Endothelial cell of umbilical vein (primary cell): ENCODE measurements at regions of chr19 and their contacts with region 1.

Region 1: DNA sequence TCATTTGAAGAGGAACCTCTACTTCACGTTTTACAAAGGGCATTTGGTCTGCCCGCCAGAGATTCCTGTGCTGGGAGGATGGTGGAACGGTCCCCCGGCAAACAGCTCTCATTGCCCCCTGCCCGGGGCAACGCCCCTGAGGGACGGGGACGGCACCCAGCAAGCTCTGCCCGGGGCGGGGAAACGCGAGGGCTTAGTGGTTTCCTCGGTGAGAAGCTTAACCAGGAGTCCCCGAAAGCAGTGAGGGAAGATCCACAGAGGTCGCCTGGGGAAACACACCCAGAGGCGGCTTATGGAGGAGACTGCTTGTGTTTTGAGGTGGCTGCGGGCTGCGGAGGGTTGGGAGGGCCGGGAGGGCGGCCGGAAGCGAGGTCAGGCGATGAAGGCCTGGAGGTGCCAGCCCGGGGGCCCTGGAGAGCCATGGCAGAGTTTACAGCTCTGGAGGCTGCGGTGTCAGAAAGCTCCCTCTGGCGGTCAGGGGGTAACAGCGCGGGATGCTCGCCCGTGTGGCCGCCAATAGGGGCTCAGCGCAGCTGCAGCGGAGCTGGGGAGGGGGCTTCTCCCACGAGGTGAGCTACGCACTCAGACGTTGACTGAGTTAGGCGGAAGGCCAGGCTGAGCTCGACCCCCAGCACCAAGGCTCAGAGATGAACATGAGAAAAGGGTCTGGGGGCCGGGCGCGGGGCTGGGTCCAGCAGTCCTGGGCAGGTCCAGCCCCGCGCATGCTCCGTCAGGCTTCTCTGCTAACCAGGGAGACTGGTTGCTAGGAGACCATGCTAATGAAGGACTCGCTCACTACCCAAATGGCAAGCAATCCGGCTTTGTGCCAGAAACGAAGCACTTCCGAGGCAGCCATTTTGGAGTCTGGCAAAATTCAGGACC is 652 bp upstream of the TPGS1 start:
- DNase-seq: peak; percentile 100
- H3K4me3 ChIP-seq: peak overlapping the region; percentile 26 to 91 (median 65)
- H3K27ac ChIP-seq: peak overlapping the region; percentile 87
- H3K4me1 ChIP-seq: peaks cover 18% of the 10 kb centered on the region
- H3K27me3 ChIP-seq: no peaks in the 10 kb centered on the region
- CTCF ChIP-seq: peak; percentile 97 to 100
- POLR2A ChIP-seq: no peak

Region 2: GRCh38 chr19:294946-295686 is 211.5 kb before region 1 on chr19:
- CTCF ChIA-PET with region 1: interaction called, 6 read pairs
- POLR2A ChIA-PET with region 1: no interaction called
- dilution Hi-C with region 1: no loop called
- intact Hi-C with region 1: loop called (anchors 10 kb)
- DNase-seq: no peak
- H3K4me3 ChIP-seq: no peak overlapping the region
- H3K27ac ChIP-seq: no peak overlapping the region
- H3K4me1 ChIP-seq: peaks cover 11% of the 10 kb centered on the region
- H3K27me3 ChIP-seq: peaks cover 16 to 28% of the 10 kb centered on the region in 2 experiments
- CTCF ChIP-seq: peak; percentile 77 to 97
- POLR2A ChIP-seq: no peak

Region 3: GRCh38 chr19:383922-384798 is 122.5 kb before region 1 on chr19:
- CTCF ChIA-PET with region 1: interaction called, 20 read pairs
- POLR2A ChIA-PET with region 1: no interaction called
- dilution Hi-C with region 1: no loop called
- intact Hi-C with region 1: loop called (anchors 1 kb)
- DNase-seq: peak; percentile 34
- H3K4me3 ChIP-seq: no peak overlapping the region
- H3K27ac ChIP-seq: no peak overlapping the region
- H3K4me1 ChIP-seq: no peaks in the 10 kb centered on the region
- H3K27me3 ChIP-seq: peaks cover 2 to 15% of the 10 kb centered on the region in 2 experiments
- CTCF ChIP-seq: peak; percentile 37 to 69
- POLR2A ChIP-seq: no peak

Region 4: GRCh38 chr19:401866-402603 is 104.6 kb before region 1 on chr19:
- CTCF ChIA-PET with region 1: no interaction called
- POLR2A ChIA-PET with region 1: no interaction called
- dilution Hi-C with region 1: no loop called
- intact Hi-C with region 1: no loop called
- DNase-seq: no peak
- H3K4me3 ChIP-seq: no peak overlapping the region
- H3K27ac ChIP-seq: no peak overlapping the region
- H3K4me1 ChIP-seq: no peaks in the 10 kb centered on the region
- H3K27me3 ChIP-seq: no peaks in the 10 kb centered on the region
- CTCF ChIP-seq: no peak
- POLR2A ChIP-seq: no peak

Region 5: DNA sequence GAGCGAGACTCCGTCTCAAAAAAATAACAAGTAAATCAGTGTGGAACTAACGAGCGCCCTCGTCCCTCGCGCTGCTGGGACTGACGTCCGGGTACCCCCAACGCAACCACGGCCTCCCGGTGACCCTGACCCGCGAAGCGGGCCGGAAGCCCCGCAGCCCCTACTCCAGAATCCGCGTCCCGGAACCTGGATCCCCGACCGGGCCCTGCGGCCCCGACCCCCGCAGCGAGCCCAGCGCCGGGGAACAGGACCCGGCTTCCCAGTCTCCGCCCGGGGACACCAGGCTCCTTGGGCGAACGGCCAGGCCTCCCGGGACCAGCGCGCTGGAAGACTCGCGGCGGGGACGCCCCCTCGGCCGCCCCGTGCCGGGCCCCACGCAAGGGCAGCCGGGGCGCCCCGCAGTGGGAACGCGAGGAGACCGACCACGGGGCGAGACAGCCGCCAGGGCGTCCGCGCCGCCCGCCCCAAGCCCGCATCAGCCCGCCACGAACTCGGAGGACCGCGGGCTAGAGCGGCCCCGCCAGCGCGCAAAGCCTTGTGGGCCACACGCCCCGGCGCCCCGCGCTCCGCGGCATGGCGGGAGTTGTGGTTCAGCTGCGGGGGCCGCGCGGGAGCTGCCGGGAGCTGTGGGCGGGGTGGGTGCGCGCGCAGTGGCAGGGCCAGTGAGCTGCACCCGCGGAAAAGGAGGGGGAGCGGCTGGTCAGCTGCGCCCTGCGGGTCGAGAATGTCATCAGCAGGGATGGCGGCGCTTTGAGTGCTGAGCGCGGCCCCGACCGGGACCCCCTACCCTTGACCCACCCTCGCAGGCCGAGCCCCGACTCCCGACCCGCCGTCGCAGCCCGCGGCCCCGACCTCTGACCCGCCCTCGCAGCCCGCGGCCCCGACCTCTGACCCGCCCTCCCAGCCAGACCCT is 17.9 kb before region 1 on chr19:
- CTCF ChIA-PET with region 1: interaction called, 10 read pairs
- POLR2A ChIA-PET with region 1: interaction called, 9 read pairs
- dilution Hi-C with region 1: no loop called
- intact Hi-C with region 1: loop called (anchors 1 kb)
- DNase-seq: peak; percentile 94
- H3K4me3 ChIP-seq: peak overlapping the region; percentile 53 to 77 (median 65)
- H3K27ac ChIP-seq: peak overlapping the region; percentile 92
- H3K4me1 ChIP-seq: peaks cover 7% of the 10 kb centered on the region
- H3K27me3 ChIP-seq: no peaks in the 10 kb centered on the region
- CTCF ChIP-seq: no peak
- POLR2A ChIP-seq: peak; percentile 87

Region 6: DNA sequence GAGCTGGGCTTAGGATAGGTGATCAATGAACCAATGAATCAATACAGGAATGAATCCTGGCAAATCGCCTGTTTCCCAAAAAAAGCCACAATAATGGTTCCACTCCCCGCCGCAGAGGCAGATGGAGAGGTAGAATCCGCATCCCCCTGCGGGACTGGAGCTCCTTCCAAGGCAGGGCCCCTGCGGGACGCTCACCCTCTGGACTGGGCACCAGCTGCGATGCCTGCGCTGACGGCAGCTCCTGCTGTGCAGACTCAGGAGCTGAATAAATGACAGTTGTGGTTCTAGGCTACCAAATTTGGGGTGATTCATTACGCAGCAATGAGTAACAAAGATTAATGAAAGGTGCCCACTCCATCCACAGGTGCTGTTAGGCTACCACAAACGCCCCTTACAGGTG is 16.1 kb after region 1 on chr19:
- CTCF ChIA-PET with region 1: interaction called, 22 read pairs
- POLR2A ChIA-PET with region 1: interaction called, 4 read pairs
- dilution Hi-C with region 1: no loop called
- intact Hi-C with region 1: no loop called
- DNase-seq: no peak
- H3K4me3 ChIP-seq: no peak overlapping the region
- H3K27ac ChIP-seq: no peak overlapping the region
- H3K4me1 ChIP-seq: no peaks in the 10 kb centered on the region
- H3K27me3 ChIP-seq: peaks cover 0 to 1% of the 10 kb centered on the region in 2 experiments
- CTCF ChIP-seq: no peak
- POLR2A ChIP-seq: no peak

Region 7: DNA sequence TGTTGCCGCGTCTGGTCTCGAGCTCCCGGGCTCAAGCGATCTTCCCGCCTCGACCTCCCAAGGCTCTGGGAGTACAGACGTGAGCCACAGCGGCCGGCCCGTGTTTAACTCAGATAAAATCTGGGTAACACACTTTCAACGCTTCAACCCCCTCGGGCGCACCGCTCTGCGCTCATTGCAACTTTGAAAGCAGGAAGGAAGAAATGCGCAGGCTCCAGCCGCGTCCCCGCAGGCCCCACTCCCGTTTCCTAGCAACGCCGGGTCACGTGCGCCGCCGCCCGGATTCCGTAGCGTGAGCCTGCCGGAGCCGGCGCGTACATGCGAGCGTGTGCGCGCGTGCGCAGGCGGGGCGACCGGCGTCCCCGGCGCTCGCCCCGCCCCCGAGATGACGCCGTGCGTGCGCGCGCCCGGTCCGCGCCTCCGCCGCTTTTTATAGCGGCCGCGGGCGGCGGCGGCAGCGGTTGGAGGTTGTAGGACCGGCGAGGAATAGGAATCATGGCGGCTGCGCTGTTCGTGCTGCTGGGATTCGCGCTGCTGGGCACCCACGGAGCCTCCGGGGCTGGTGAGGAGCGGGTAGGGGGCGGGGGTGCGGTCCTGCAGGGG is 65.6 kb after region 1 on chr19 and contains the start of gene BSG:
- CTCF ChIA-PET with region 1: interaction called, 5 read pairs
- POLR2A ChIA-PET with region 1: interaction called, 4 read pairs
- dilution Hi-C with region 1: no loop called
- intact Hi-C with region 1: loop called (anchors 2 kb)
- DNase-seq: peak; percentile 97
- H3K4me3 ChIP-seq: peak within 1 kb of the TSS; percentile 68 to 92 (median 88)
- H3K27ac ChIP-seq: peak within 1 kb of the TSS; percentile 72
- H3K4me1 ChIP-seq: peaks cover 28% of the 10 kb centered on the region
- H3K27me3 ChIP-seq: no peaks in the 10 kb centered on the region
- CTCF ChIP-seq: no peak
- POLR2A ChIP-seq: peak; percentile 99
- total RNA-seq, gene BSG: 466 and 485 TPM in 2 replicates